ENCODE measurements at regions of chr19 and their contacts with region 1.

Region 1: GRCh38 chr19:46704379-46705076 is 12.4 kb downstream of the PRKD2 start:
- DNase-seq: peak; percentile 60 to 71 (median 68)
- H3K4me3 ChIP-seq: no peak overlapping the region
- H3K4me3 Mint-ChIP-seq: no peak overlapping the region
- H3K27ac ChIP-seq: no peak overlapping the region
- H3K27ac Mint-ChIP-seq: peak overlapping the region in 3 of 7 donors; percentile 20 to 85 (median 60)
- H3K4me1 ChIP-seq: no peaks in the 10 kb centered on the region
- H3K4me1 Mint-ChIP-seq: peaks cover 3% of the 10 kb centered on the region
- H3K27me3 ChIP-seq: no peaks in the 10 kb centered on the region
- H3K27me3 Mint-ChIP-seq: no peaks in the 10 kb centered on the region
- CTCF ChIP-seq: peak; percentile 97

Region 2: GRCh38 chr19:46753420-46754155 is 49.1 kb after region 1 on chr19:
- intact Hi-C with region 1: loop called (anchors 2 to 5 kb)
- DNase-seq: peak; percentile 38 to 57 (median 53)
- H3K4me3 ChIP-seq: no peak overlapping the region
- H3K4me3 Mint-ChIP-seq: no peak overlapping the region
- H3K27ac ChIP-seq: no peak overlapping the region
- H3K27ac Mint-ChIP-seq: no peak overlapping the region
- H3K4me1 ChIP-seq: peaks cover 18 to 22% of the 10 kb centered on the region in 2 donors
- H3K4me1 Mint-ChIP-seq: peaks cover 19% of the 10 kb centered on the region
- H3K27me3 ChIP-seq: no peaks in the 10 kb centered on the region
- H3K27me3 Mint-ChIP-seq: peaks cover 0 to 4% (median 4%) of the 10 kb centered on the region in 3 donors
- CTCF ChIP-seq: peak; percentile 68